Psoas muscle (tissue), 8 donors: ENCODE measurements at regions of chr11 and their contacts with region 1.

Region 1: DNA sequence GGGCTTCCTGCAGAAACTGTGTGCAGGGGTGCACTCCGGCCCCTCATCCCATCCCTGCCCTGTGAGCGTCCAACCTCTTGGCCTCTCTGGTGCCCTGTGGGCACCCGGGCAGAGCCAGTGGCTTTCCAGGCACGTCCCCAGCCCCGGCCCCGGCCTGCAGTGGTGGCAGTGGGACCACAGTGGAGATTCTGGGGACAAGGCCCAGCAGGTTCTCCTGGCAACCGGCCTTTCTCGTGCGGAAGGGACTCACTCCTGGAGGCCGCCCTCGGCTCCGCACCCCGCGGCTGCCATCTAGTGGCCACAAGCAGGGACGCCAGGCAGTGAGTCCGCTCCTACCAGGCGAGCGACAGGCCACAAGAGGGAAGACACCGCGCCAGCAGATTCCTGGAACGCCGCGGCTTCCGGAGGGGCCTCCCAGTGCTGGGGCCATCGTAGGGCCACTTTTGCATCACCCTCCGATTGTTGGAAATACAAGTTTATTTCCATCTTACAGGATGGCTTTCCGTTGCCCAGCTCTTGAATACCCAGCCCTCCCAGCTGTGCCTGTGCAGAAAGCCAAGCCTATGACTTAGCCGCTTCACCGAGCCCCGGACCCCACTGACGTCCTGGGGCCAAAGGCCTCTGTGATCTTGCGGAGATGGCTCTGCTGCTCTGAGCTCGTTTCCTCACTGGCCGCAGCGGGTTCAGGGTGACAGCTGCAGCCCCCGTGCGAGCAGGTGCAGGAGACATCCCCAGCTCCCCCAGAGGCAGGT is 357.3 kb downstream of the CTTN start:
- DNase-seq: peak; percentile 73 to 86
- ATAC-seq: peak; percentile 96 to 99 (median 97)
- H3K4me3 ChIP-seq: no peak overlapping the region
- H3K27ac ChIP-seq: no peak overlapping the region
- H3K4me1 ChIP-seq: no peaks in the 10 kb centered on the region
- H3K27me3 ChIP-seq: peaks cover 0 to 18% (median 5%) of the 10 kb centered on the region in 3 donors
- CTCF ChIP-seq: peak; percentile 96

Region 2: DNA sequence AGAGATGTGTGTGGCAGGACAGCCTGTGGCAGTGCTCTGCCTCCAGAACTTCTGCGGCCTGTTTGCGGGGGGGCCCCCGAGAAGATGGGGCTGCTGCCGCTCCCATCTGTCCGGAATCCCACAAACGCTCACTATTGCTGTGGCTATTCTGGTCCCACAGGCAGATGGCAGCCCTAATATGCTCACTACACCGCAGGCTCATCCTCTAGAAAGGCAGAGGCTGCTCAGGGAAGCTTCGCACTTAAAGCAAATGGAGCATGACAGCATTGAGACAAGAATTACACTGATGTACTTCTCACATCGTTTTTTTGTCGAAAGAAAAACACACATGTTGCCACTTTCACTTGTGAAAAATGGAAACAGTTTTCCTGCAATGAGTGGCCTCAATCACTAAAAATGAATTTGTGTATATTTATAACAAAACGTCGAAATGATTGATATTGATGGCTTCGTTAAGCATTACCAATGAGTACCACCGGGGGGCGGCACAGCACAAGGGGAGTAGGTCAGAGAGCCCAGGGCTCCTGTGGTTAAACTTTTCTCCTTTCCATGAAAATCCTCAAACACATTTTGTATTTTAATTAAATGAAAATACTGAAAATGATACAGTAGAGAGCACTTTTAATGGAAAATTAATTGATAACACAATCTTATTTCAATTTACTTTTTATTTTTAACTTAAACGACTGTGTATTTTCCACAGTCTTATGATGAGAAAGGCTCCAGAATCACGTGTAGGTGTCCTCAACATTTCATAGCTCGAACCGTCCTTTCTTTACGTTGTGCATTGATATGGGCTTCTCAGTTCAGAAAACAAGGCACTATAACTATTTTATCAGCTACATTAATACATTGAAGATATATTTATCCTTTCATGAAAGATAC is 288.1 kb before region 1 on chr11:
- intact Hi-C with region 1: loop called (anchors 1 to 2 kb)
- DNase-seq: peak; percentile 53 to 72
- ATAC-seq: peak; percentile 49 to 71 (median 50)
- H3K4me3 ChIP-seq: no peak overlapping the region
- H3K27ac ChIP-seq: no peak overlapping the region
- H3K4me1 ChIP-seq: peaks cover 10% of the 10 kb centered on the region
- H3K27me3 ChIP-seq: peaks cover 0 to 3% (median 1%) of the 10 kb centered on the region in 3 donors
- CTCF ChIP-seq: peak; percentile 96

Region 3: GRCh38 chr11:70568038-70568813 is 187.4 kb before region 1 on chr11:
- intact Hi-C with region 1: loop called in 1 of 2 experiments (anchors 10 kb)
- DNase-seq: peak; percentile 51 to 68
- ATAC-seq: peak; percentile 34 to 67 (median 52)
- H3K4me3 ChIP-seq: peak overlapping the region; percentile 60
- H3K27ac ChIP-seq: peak overlapping the region; percentile 32
- H3K4me1 ChIP-seq: no peaks in the 10 kb centered on the region
- H3K27me3 ChIP-seq: peaks cover 0 to 15% (median 0%) of the 10 kb centered on the region in 3 donors
- CTCF ChIP-seq: no peak

Region 4: GRCh38 chr11:70732881-70733196 is 22.7 kb before region 1 on chr11:
- intact Hi-C with region 1: no loop called
- DNase-seq: peak in 1 of 2 donors; percentile 34
- ATAC-seq: no peak
- H3K4me3 ChIP-seq: no peak overlapping the region
- H3K27ac ChIP-seq: no peak overlapping the region
- H3K4me1 ChIP-seq: no peaks in the 10 kb centered on the region
- H3K27me3 ChIP-seq: peaks cover 0 to 7% (median 0%) of the 10 kb centered on the region in 3 donors
- CTCF ChIP-seq: no peak